ENCODE measurements at regions of chr14 and their contacts with region 1.

Region 1: GRCh38 chr14:35416108-35416750 is 11.7 kb upstream of the NFKBIA start:
- DNase-seq: peak; percentile 90
- H3K4me3 Mint-ChIP-seq: peak overlapping the region; percentile 78
- H3K27ac Mint-ChIP-seq: peak overlapping the region; percentile 95
- H3K4me1 Mint-ChIP-seq: peaks cover 51% of the 10 kb centered on the region
- H3K27me3 Mint-ChIP-seq: peaks cover 4% of the 10 kb centered on the region

Region 2: DNA sequence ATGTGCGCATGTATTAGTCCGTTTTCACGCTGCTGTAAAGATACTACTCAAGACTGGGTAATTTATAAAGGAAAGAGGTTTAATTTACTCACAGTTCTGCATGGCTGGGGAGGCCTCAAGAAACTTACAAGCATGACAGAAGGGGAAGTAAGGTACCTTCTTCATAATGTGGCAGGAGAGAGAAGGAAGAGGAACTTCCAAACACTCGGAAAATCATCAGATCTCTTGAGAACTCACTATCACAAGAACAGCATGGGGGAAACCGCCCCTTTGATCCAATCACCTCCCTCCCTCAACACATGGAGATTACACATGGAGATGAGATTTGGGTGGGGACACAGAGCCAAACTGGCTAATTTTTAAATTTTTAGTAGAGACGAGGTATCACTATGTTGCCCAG is 744.5 kb before region 1 on chr14:
- intact Hi-C with region 1: loop called (anchors 5 kb)
- DNase-seq: no peak
- H3K4me3 Mint-ChIP-seq: no peak overlapping the region
- H3K27ac Mint-ChIP-seq: no peak overlapping the region
- H3K4me1 Mint-ChIP-seq: no peaks in the 10 kb centered on the region
- H3K27me3 Mint-ChIP-seq: no peaks in the 10 kb centered on the region

Region 3: GRCh38 chr14:34875031-34875922 is 541.0 kb before region 1 on chr14 and contains the start of gene BAZ1A:
- intact Hi-C with region 1: loop called (anchors 2 kb)
- DNase-seq: peak; percentile 85
- H3K4me3 Mint-ChIP-seq: peak within 1 kb of the TSS; percentile 100
- H3K27ac Mint-ChIP-seq: peak within 1 kb of the TSS; percentile 100
- H3K4me1 Mint-ChIP-seq: peaks cover 23% of the 10 kb centered on the region
- H3K27me3 Mint-ChIP-seq: no peaks in the 10 kb centered on the region
- total RNA-seq, gene BAZ1A: 89.7 TPM in 2 replicates

Region 4: GRCh38 chr14:35046048-35046741 is 370.0 kb before region 1 on chr14 and contains the start of gene FAM177A1:
- intact Hi-C with region 1: loop called (anchors 5 kb)
- DNase-seq: peak; percentile 99
- H3K4me3 Mint-ChIP-seq: peak within 1 kb of the TSS; percentile 96
- H3K27ac Mint-ChIP-seq: peak within 1 kb of the TSS; percentile 99
- H3K4me1 Mint-ChIP-seq: peaks cover 28% of the 10 kb centered on the region
- H3K27me3 Mint-ChIP-seq: no peaks in the 10 kb centered on the region
- total RNA-seq, gene FAM177A1: 37.9 and 41.6 TPM in 2 replicates

Region 5: DNA sequence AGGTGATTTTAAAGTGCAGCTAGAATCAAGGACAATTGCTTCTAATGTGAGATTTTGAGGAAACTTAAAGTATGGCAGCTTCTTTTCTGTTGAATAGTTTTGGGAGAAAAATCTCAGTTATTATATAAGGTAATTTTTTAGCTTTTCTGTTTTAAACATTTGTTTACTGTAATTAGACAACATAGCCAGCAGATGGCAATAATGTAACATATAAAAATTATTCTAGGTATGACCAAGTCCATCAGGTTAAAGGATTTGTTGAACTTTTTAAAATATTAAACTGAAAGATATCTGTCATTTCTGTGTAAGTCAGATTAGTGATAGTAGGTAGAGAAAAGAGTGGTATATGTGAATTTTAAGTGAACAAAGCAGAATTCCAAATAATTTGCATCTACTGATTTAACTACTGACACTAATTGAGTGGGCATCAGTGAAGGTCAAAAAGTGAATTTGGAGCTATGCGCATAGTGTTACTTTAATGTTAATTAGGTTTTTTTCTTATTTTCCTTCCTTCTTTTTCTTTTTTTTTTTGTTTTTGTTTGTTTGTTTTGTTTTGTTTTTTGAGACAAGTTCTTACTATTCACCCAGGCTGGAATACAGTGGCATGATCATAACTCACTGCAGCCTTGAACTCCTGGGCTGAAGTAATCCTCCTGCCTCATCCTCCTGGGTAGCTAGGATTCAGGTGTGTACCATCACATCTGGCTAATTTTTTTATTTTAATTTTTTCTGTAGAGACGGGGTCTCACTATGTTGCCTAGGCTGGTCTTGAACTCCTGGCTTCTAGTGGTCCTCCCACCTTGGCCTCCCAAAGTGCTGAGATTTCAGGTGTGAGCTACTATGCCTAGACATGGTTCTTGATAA is 275.3 kb before region 1 on chr14:
- intact Hi-C with region 1: loop called (anchors 1 kb)
- DNase-seq: no peak
- H3K4me3 Mint-ChIP-seq: no peak overlapping the region
- H3K27ac Mint-ChIP-seq: no peak overlapping the region
- H3K4me1 Mint-ChIP-seq: peaks cover 19% of the 10 kb centered on the region
- H3K27me3 Mint-ChIP-seq: no peaks in the 10 kb centered on the region

Region 6: GRCh38 chr14:35285168-35286002 is 130.8 kb before region 1 on chr14:
- intact Hi-C with region 1: loop called (anchors 1 kb)
- DNase-seq: peak; percentile 76
- H3K4me3 Mint-ChIP-seq: peak overlapping the region; percentile 78
- H3K27ac Mint-ChIP-seq: peak overlapping the region; percentile 97
- H3K4me1 Mint-ChIP-seq: peaks cover 52% of the 10 kb centered on the region
- H3K27me3 Mint-ChIP-seq: no peaks in the 10 kb centered on the region

Region 7: GRCh38 chr14:35687335-35687939 is 271.2 kb after region 1 on chr14:
- intact Hi-C with region 1: loop called (anchors 2 kb)
- DNase-seq: peak; percentile 78
- H3K4me3 Mint-ChIP-seq: no peak overlapping the region
- H3K27ac Mint-ChIP-seq: no peak overlapping the region
- H3K4me1 Mint-ChIP-seq: peaks cover 14% of the 10 kb centered on the region
- H3K27me3 Mint-ChIP-seq: no peaks in the 10 kb centered on the region